ENCODE measurements at regions of chr12 and their contacts with region 1.

Region 1: GRCh38 chr12:29317556-29318363 is 63.2 kb downstream of the ERGIC2 start:
- DNase-seq: peak in 9 of 10 donors; percentile 12 to 75 (median 51)
- H3K4me3 ChIP-seq: peak overlapping the region in 6 of 59 donors; percentile 6 to 40 (median 12)
- H3K27ac ChIP-seq: peak overlapping the region in 34 of 59 donors; percentile 3 to 75 (median 51)
- H3K27me3 ChIP-seq: no peaks in the 10 kb centered on the region
- CTCF ChIP-seq: peak; percentile 58 to 99 (median 94)

Region 2: GRCh38 chr12:29073628-29074239 is 244.0 kb before region 1 on chr12:
- intact Hi-C with region 1: loop called (anchors 2 to 5 kb)
- DNase-seq: peak in 2 of 10 donors; percentile 9 to 16
- H3K4me3 ChIP-seq: no peak overlapping the region
- H3K27ac ChIP-seq: no peak overlapping the region
- H3K27me3 ChIP-seq: no peaks in the 10 kb centered on the region
- CTCF ChIP-seq: peak; percentile 63 to 95 (median 84)

Region 3: GRCh38 chr12:29110506-29111442 is 207.0 kb before region 1 on chr12:
- intact Hi-C with region 1: no loop called
- DNase-seq: no peak
- H3K4me3 ChIP-seq: no peak overlapping the region
- H3K27ac ChIP-seq: no peak overlapping the region
- H3K27me3 ChIP-seq: no peaks in the 10 kb centered on the region
- CTCF ChIP-seq: no peak

Region 4: DNA sequence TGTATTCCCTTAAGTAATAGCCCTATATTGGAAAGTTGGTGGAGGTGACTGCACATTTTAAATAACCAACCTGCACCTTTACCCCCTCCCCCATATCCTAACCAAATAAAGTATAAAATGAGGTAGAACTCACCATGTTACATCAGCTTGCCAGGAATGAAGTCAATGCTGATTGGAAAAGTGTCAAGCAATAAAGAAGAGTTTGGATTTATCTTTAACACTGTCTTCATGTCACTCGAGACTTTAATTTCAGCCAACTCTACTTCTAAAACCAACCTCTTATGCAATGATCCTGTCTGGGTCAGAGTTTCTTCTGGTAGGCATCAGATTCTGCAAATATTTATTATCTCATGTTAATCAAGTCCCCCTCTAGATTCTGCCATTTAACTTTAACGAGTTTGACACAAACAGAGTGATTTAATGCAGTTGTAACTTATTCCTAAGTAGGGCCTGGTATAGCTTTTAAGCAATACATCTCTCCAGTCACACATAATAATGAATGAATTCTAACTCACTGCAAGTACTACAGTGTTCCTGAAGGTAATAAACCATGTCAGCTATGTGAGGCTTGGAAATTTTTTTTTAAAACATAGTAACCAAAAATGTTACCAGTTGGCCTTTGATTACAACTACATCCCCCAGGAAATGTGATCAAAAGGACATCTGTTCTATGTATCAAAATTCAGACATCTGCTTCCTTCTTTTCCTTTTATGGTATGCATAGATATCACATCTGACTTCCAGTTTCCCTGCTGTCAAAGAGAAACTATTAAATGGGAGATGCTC is 35.5 kb before region 1 on chr12:
- intact Hi-C with region 1: no loop called
- DNase-seq: no peak
- H3K4me3 ChIP-seq: no peak overlapping the region
- H3K27ac ChIP-seq: no peak overlapping the region
- H3K27me3 ChIP-seq: no peaks in the 10 kb centered on the region
- CTCF ChIP-seq: no peak

Region 5: GRCh38 chr12:29425714-29426113 is 108.0 kb after region 1 on chr12:
- intact Hi-C with region 1: no loop called
- DNase-seq: no peak
- H3K4me3 ChIP-seq: no peak overlapping the region
- H3K27ac ChIP-seq: no peak overlapping the region
- H3K27me3 ChIP-seq: no peaks in the 10 kb centered on the region
- CTCF ChIP-seq: no peak

Region 6: DNA sequence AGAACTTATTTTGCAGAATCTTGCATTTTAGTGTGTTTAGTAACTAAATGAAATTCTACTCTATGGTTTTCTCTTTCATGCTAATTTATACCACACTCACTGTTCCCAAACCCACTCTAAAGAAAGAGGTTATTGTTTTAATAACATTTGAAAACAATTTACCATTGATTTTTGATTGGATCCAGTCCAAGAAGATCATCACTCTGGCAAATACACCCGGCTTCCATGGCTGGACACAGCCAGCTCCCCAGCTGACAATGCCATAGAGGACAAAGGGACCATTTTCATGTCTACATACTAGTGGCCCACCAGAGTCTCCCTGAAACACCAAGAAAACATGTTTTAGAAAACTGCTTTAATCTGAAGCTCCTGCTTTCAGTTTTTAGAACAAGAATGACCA is 137.3 kb after region 1 on chr12:
- intact Hi-C with region 1: loop called in 1 of 2 experiments (anchors 10 kb)
- DNase-seq: peak in 9 of 10 donors; percentile 31 to 73 (median 47)
- H3K4me3 ChIP-seq: peak overlapping the region in 27 of 59 donors; percentile 0 to 48 (median 20)
- H3K27ac ChIP-seq: peak overlapping the region in 57 of 59 donors; percentile 5 to 97 (median 83)
- H3K27me3 ChIP-seq: no peaks in the 10 kb centered on the region
- CTCF ChIP-seq: peak in 3 of 56 donors; percentile 7 to 20 (median 17)

Region 7: DNA sequence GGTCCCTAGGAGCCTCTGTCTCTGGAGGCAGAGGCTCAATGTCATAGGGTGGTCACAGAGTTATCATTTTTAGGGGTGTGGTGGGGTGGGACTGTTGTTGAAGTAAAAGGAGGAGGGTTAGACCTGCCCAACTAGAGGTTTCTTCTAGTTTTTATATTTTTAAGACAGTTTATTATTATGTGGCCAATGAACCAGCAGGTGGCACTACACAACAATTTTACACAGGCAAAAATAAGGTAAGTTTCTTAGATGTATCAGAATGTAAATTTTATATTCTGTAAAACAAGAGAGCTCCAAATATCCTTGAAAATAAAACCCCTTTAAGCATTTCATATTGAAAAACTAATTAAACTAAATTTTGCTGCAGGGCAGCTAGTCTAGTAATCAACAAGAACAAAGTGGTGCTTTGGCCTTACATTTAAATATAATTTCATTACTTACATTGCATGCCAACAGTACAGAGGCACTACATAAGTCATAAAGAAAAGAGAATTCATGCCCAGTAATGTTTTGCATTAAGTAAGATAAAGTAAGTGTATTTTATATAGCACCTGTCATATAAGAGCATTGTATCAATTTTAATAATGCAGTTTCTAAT is 201.9 kb after region 1 on chr12:
- intact Hi-C with region 1: loop called in 1 of 2 experiments (anchors 10 kb)
- DNase-seq: peak in 1 of 10 donors; percentile 18
- H3K4me3 ChIP-seq: no peak overlapping the region
- H3K27ac ChIP-seq: peak overlapping the region in 2 of 59 donors; percentile 9 to 17
- H3K27me3 ChIP-seq: no peaks in the 10 kb centered on the region
- CTCF ChIP-seq: peak; percentile 53 to 87 (median 76)

Region 8: GRCh38 chr12:30806989-30807694 is 1489.4 kb after region 1 on chr12:
- intact Hi-C with region 1: loop called in 1 of 2 experiments (anchors 5 kb)
- DNase-seq: peak in 2 of 10 donors; percentile 35 to 45
- H3K4me3 ChIP-seq: no peak overlapping the region
- H3K27ac ChIP-seq: no peak overlapping the region
- H3K27me3 ChIP-seq: peaks cover 0 to 3% (median 0%) of the 10 kb centered on the region in 45 donors
- CTCF ChIP-seq: peak; percentile 45 to 82 (median 66)

Measured in dorsolateral prefrontal cortex (tissue), 120 donors.